A549 (cell line): ENCODE measurements at regions of chr10 and their contacts with region 1.

Region 1: GRCh38 chr10:79358783-79359182 is 11.5 kb downstream of the PPIF start:
- DNase-seq: no peak
- ATAC-seq: no peak
- H3K4me3 ChIP-seq: no peak overlapping the region
- H3K27ac ChIP-seq: no peak overlapping the region
- H3K4me1 ChIP-seq: no peaks in the 10 kb centered on the region
- CTCF ChIP-seq: no peak
- EP300 ChIP-seq: no peak
- POLR2A ChIP-seq: no peak
- RAD21 ChIP-seq: no peak

Region 2: DNA sequence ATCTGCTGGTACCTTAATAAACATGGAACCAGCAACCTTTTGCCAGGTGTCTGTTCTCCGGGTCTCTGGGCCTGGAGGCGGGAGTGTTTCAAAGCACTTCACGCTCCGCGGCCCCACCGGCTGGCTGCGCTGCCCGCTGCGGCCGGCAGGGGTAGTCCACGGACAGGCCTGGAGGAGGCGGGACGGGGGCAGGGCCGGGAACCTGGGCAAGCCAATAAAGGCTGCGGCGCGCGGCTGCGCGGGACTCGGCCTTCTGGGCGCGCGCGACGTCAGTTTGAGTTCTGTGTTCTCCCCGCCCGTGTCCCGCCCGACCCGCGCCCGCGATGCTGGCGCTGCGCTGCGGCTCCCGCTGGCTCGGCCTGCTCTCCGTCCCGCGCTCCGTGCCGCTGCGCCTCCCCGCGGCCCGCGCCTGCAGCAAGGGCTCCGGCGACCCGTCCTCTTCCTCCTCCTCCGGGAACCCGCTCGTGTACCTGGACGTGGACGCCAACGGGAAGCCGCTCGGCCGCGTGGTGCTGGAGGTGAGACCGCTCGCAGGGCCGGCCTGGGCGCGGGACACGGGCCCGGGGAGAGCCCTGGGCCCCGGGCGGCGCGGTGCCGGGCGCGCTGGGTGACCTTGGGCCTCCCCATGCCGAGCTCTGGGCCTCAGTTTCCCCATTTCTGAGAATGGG is 11.4 kb before region 1 on chr10 and contains the start of gene PPIF:
- CTCF ChIA-PET with region 1: interaction called, 14 read pairs
- POLR2A ChIA-PET with region 1: no interaction called
- DNase-seq: peak; percentile 74 to 91
- ATAC-seq: peak; percentile 86 to 90
- H3K4me3 ChIP-seq: peak within 1 kb of the TSS; percentile 84
- H3K27ac ChIP-seq: peak within 1 kb of the TSS; percentile 89 to 97
- H3K4me1 ChIP-seq: peaks cover 18% of the 10 kb centered on the region
- CTCF ChIP-seq: peak; percentile 88
- EP300 ChIP-seq: no peak
- POLR2A ChIP-seq: peak; percentile 89
- RAD21 ChIP-seq: peak; percentile 50 to 70; a peak in 4 of 5 replicates
- polyA plus RNA-seq, gene PPIF: 44.8 and 51.9 TPM in 2 replicates

Region 3: DNA sequence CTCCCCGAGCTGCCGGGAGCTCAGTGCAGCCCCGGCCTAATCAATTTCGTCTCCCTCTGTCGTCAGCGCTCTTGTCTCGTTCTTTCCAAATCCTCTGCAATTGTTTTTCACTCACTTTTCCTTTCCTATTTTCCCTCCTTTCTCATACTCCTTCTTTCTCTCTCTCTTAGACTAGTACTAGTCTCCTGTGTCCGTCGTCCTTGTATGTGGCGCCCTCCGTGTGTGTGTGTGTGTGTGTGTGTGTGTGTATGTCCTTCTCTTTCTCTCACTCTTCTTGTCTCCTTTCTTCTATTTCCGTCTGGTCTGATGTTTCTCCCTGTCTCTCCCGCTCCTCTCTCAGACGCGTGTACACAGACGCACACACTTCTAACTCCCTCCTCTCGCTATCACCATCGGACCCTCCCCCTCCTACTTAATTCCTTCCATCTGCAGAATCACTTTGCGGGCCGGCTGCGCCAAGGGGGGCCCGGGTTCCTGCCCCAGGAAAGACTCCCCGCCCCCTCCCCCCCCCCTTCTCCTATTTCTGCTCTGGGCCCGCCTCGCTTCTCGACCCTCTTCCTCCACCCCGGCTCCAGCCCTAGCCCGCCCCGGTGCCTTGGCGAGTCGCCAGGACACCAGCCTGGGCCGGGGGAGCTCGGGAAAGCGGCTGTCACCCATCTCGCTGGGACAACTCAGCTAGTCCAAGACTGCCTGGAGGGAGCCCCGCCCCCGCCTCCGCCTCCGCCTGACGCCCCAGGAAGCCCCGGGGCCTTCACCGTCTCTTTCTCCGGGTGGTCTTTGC is 87.4 kb after region 1 on chr10:
- CTCF ChIA-PET with region 1: no interaction called
- POLR2A ChIA-PET with region 1: interaction called, 10 read pairs
- DNase-seq: peak in 1 of 2 experiments; percentile 27
- ATAC-seq: peak; percentile 16 to 22
- H3K4me3 ChIP-seq: peak overlapping the region; percentile 75
- H3K27ac ChIP-seq: peak overlapping the region; percentile 13 to 84; a peak in 4 of 6 replicates
- H3K4me1 ChIP-seq: peaks cover 22% of the 10 kb centered on the region
- CTCF ChIP-seq: no peak
- EP300 ChIP-seq: no peak
- POLR2A ChIP-seq: no peak
- RAD21 ChIP-seq: no peak